Endothelial cell of umbilical vein (primary cell): ENCODE measurements at regions of chr20 and their contacts with region 1.

Region 1: DNA sequence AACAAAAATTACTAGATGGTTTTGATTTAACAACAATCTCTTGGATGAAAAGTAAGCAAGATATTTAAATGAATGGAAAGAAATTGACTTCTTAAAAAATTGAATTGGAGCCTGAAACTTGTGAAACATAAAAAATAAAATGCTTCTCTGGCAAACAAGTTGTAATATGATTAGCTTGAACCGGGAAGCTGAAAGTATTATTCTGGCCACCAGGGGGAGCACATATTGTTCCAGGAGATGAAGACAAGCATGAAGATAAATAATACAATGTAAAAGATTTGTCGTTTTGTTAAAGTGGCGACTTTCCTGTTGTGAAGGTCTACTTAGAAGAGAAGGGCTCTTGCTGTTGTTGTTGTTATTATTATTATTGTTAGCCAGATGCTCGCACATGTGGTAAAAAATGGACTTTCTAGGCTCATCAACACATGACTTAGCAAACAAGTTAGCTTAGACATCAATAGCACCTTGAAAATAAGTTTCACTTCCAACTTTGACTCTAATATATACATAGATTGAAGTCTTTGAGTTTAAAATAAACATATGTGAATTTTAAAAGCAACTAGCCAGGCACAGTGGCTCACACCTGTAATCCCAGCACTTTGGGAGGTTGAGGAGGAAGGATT is 14.2 kb downstream of the PAX1 start:
- DNase-seq: peak; percentile 67
- H3K4me3 ChIP-seq: no peak overlapping the region
- H3K27ac ChIP-seq: no peak overlapping the region
- H3K4me1 ChIP-seq: no peaks in the 10 kb centered on the region
- H3K27me3 ChIP-seq: peaks cover 15 to 17% of the 10 kb centered on the region in 2 experiments
- CTCF ChIP-seq: peak; percentile 44 to 59
- POLR2A ChIP-seq: no peak

Region 2: GRCh38 chr20:21693322-21693721 is 26.4 kb before region 1 on chr20:
- CTCF ChIA-PET with region 1: interaction called, 11 read pairs
- POLR2A ChIA-PET with region 1: no interaction called
- dilution Hi-C with region 1: no loop called
- intact Hi-C with region 1: no loop called
- DNase-seq: no peak
- H3K4me3 ChIP-seq: no peak overlapping the region
- H3K27ac ChIP-seq: no peak overlapping the region
- H3K4me1 ChIP-seq: no peaks in the 10 kb centered on the region
- H3K27me3 ChIP-seq: peaks cover 0 to 3% of the 10 kb centered on the region in 2 experiments
- CTCF ChIP-seq: no peak
- POLR2A ChIP-seq: no peak

Region 3: GRCh38 chr20:21702553-21703470 is 16.9 kb before region 1 on chr20:
- CTCF ChIA-PET with region 1: interaction called, 71 read pairs
- POLR2A ChIA-PET with region 1: no interaction called
- dilution Hi-C with region 1: no loop called
- intact Hi-C with region 1: no loop called
- DNase-seq: peak; percentile 41
- H3K4me3 ChIP-seq: no peak overlapping the region
- H3K27ac ChIP-seq: no peak overlapping the region
- H3K4me1 ChIP-seq: no peaks in the 10 kb centered on the region
- H3K27me3 ChIP-seq: peaks cover 73 to 82% of the 10 kb centered on the region in 2 experiments
- CTCF ChIP-seq: peak; percentile 46 to 69
- POLR2A ChIP-seq: no peak

Region 4: GRCh38 chr20:21708738-21709534 is 10.8 kb before region 1 on chr20:
- CTCF ChIA-PET with region 1: interaction called, 71 read pairs
- POLR2A ChIA-PET with region 1: no interaction called
- dilution Hi-C with region 1: no loop called
- intact Hi-C with region 1: no loop called
- DNase-seq: no peak
- H3K4me3 ChIP-seq: no peak overlapping the region
- H3K27ac ChIP-seq: no peak overlapping the region
- H3K4me1 ChIP-seq: no peaks in the 10 kb centered on the region
- H3K27me3 ChIP-seq: peaks cover 68 to 83% of the 10 kb centered on the region in 2 experiments
- CTCF ChIP-seq: no peak
- POLR2A ChIP-seq: no peak

Region 5: DNA sequence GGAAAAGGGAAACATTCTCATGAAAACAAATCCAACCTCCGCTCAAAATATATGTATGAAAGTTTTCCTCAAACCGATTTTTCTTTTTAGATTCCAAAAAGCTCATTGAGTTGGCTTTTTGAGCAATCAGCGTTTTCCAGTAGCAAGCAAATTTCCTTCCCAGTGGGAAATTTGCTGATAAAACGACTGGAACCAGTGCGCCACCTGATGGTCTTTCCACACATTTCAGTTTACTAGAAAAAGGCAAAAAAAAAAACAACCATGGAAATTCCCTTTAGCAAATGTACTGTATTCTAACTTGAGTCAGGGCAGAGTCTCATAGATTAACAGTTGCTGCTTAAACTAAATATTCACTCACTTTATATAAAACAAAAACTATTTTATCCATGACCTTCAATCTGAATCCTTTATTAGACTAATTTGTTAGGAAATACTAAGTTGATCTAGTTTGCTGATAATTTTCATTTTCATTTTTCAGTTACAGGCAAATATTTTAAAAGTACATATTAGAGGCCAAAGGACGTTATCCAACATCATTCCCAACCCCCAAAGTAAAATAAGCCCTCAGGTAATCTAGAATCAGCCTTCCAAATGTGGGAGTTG is 593.1 kb after region 1 on chr20:
- CTCF ChIA-PET with region 1: interaction called, 107 read pairs
- POLR2A ChIA-PET with region 1: no interaction called
- dilution Hi-C with region 1: no loop called
- intact Hi-C with region 1: loop called (anchors 1 kb)
- DNase-seq: peak; percentile 60
- H3K4me3 ChIP-seq: no peak overlapping the region
- H3K27ac ChIP-seq: no peak overlapping the region
- H3K4me1 ChIP-seq: no peaks in the 10 kb centered on the region
- H3K27me3 ChIP-seq: no peaks in the 10 kb centered on the region
- CTCF ChIP-seq: peak; percentile 50 to 62
- POLR2A ChIP-seq: no peak